Right cardiac atrium (tissue), 5 donors: ENCODE measurements at regions of chr14 and their contacts with region 1.

Region 1: DNA sequence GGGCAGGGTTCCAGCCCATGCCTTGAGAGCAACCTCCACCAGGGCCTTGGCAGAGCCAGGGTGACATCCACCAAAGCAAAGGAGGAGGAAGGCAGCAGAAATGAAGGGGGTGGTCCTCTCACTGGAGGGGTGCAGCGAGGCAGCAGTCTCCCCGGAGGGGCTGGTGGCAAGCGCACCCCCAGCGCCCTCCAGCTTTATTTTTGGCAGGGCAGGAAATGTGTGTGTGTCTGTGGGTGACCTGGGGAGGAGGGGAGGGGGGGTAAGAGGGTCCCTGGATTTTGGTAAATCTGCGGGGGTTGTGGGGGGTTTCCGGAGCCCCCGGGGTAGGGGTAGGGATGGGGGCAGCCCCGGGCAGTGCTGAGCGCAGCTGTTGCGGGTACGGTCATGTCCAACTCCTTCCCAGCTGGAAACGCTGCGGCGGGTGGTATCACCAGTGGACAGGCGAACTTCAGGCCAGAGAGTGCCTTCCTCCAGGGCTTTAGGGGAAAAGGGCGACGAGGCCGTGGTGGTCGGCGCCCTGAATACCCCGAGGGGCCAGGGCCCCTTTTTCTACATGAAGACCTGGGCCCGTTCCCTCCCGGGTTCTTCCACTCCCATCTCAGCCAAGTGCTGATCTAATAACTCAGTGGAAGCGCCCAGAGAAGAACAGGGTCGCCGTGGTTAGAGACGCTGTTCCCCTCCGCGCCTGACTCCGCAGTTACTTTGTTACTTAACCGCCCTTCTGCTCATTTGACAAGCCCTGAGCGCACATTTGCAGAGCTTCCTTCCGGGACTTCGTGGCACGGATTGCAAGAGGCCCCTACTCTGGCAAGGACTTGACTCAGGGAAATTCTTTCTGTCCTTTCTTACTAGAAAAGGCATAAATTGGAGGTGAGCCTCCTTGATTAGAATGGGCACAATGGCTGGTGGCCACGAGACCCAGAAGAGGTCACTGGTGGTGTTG is 55.2 kb downstream of the FOS start:
- DNase-seq: peak; percentile 62 to 83 (median 70)
- ATAC-seq: peak; percentile 67 to 75
- H3K4me3 ChIP-seq: no peak overlapping the region
- H3K27ac ChIP-seq: peak overlapping the region; percentile 65
- H3K4me1 ChIP-seq: peaks cover 2% of the 10 kb centered on the region
- H3K27me3 ChIP-seq: no peaks in the 10 kb centered on the region

Region 2: GRCh38 chr14:75560962-75561432 is 227.1 kb after region 1 on chr14:
- intact Hi-C with region 1: loop called in 1 of 4 experiments (anchors 10 kb)
- DNase-seq: peak; percentile 63 to 85 (median 77)
- ATAC-seq: peak; percentile 80 to 83
- H3K4me3 ChIP-seq: no peak overlapping the region
- H3K27ac ChIP-seq: no peak overlapping the region
- H3K4me1 ChIP-seq: no peaks in the 10 kb centered on the region
- H3K27me3 ChIP-seq: no peaks in the 10 kb centered on the region